ENCODE measurements at regions of chr17 and their contacts with region 1.

Region 1: DNA sequence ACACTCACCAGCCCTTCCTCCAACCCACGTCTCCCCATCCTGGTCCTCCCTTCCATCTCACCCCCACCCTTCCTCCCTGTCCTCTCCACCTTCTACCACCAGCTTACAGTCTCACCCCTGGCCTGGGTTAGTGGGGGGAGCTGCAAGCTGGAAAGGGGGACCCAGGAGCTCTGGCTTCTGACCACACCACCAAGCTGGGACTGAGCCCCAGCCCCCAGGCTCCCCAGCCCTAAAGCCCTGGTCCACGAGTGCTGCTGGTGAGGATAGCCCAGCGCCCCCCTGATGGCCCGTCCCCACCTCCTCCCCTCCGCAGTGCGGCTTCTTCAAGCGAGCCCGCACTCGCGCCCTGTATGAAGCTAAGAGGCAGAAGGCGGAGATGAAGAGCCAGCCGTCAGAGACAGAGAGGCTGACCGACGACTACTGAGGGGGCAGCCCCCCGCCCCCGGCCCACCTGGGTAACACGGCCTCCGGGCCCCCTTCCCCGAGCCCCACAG is 7.2 kb upstream of the PDK2 start:
- DNase-seq: no peak
- H3K4me3 ChIP-seq: no peak overlapping the region
- H3K27ac ChIP-seq: no peak overlapping the region
- H3K4me1 ChIP-seq: no peaks in the 10 kb centered on the region
- H3K27me3 ChIP-seq: no peaks in the 10 kb centered on the region
- CTCF ChIP-seq: no peak
- POLR2A ChIP-seq: no peak

Region 2: GRCh38 chr17:50026901-50027630 is 60.9 kb before region 1 on chr17:
- intact Hi-C with region 1: loop called (anchors 2 kb)
- DNase-seq: peak; percentile 82 to 90
- H3K4me3 ChIP-seq: peak overlapping the region in 1 of 2 donors; percentile 14
- H3K27ac ChIP-seq: peak overlapping the region; percentile 6 to 45
- H3K4me1 ChIP-seq: peaks cover 0 to 20% of the 10 kb centered on the region in 2 donors
- H3K27me3 ChIP-seq: no peaks in the 10 kb centered on the region
- CTCF ChIP-seq: peak; percentile 89 to 97 (median 96)
- POLR2A ChIP-seq: no peak

Measured in uterus (tissue), 4 donors.